ENCODE measurements at regions of chr1 and their contacts with region 1.

Region 1: DNA sequence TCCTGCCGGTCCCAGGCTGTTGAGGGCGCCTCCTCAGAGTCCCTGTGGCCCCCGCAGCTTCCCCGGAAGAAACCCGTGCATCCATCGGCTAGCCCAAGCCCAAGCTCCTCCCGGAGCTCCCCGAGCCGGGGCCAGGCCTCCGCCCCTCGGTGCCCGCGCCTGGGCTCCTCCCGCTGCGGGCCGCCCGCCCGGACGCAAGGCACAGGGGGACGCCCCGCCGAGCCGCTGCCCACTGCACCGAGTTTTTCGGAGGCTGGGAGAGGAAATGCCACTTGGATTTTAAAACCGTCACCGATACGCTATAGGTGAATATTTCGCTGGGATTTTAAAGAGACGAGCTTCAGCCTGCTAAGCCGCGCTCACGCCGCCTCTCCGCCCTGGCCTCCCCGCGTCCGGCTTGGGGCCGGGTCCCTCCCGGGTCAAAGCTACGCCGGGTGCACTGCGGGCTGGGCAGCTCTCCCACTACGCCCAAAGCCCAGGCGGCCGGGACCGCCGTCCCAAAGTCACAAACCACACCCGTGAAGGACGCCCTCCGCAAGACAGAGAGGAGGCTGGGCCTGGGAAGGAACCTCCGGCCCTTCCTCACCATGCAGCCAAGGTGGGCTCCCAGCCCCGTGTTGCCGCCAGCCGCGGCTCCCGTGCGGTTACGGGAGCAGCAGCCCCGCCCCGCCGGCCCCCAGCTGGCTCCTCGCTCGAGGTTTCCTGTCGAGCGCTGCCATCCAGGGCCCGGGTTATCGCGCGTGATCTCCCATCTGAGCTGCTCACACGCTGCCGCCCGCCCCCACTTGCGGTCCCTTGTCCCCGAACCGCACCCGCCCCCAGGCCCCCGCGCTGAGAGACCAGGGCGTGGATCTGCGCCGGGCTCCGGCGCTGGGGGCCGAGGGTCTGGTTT is 63.2 kb downstream of the CD247 start:
- DNase-seq: peak; percentile 82
- H3K4me3 ChIP-seq: peak overlapping the region; percentile 53 to 81 (median 72)
- H3K27ac ChIP-seq: peak overlapping the region; percentile 76 to 87 (median 80)
- H3K4me1 ChIP-seq: peaks cover 0 to 8% (median 5%) of the 10 kb centered on the region in 4 donors
- H3K27me3 ChIP-seq: no peaks in the 10 kb centered on the region
- CTCF ChIP-seq: no peak
- EP300 ChIP-seq: no peak
- POLR2A ChIP-seq: peak in 1 of 2 donors; percentile 19

Region 2: GRCh38 chr1:166902271-166902670 is 552.9 kb before region 1 on chr1:
- intact Hi-C with region 1: loop called (anchors 10 kb)
- DNase-seq: no peak
- H3K4me3 ChIP-seq: no peak overlapping the region
- H3K27ac ChIP-seq: peak overlapping the region in 1 of 4 donors; percentile 18
- H3K4me1 ChIP-seq: peaks cover 0 to 50% (median 40%) of the 10 kb centered on the region in 4 donors
- H3K27me3 ChIP-seq: no peaks in the 10 kb centered on the region
- CTCF ChIP-seq: no peak
- EP300 ChIP-seq: no peak
- POLR2A ChIP-seq: no peak

Measured in sigmoid colon (tissue), 7 donors.